Mammary epithelial cell (primary cell): ENCODE measurements at regions of chr16 and their contacts with region 1.

Region 1: GRCh38 chr16:58198022-58198683 is at the start of gene CSNK2A2:
- DNase-seq: peak; percentile 59
- H3K4me3 ChIP-seq: peak within 1 kb of the TSS; percentile 74 to 88 (median 82)
- H3K27ac ChIP-seq: no peak within 1 kb of the TSS
- H3K4me1 ChIP-seq: peaks cover 16% of the 10 kb centered on the region
- H3K27me3 ChIP-seq: no peaks in the 10 kb centered on the region
- CTCF ChIP-seq: peak; percentile 31 to 50
- total RNA-seq, gene CSNK2A2: 29.3 to 79.7 TPM

Region 2: GRCh38 chr16:58306327-58306726 is 108.2 kb after region 1 on chr16:
- CTCF ChIA-PET with region 1: no interaction called
- dilution Hi-C with region 1: no loop called
- in situ Hi-C with region 1: no loop called
- intact Hi-C with region 1: loop called (anchors 2 kb)
- DNase-seq: peak; percentile 21
- H3K4me3 ChIP-seq: no peak overlapping the region
- H3K27ac ChIP-seq: no peak overlapping the region
- H3K4me1 ChIP-seq: no peaks in the 10 kb centered on the region
- H3K27me3 ChIP-seq: no peaks in the 10 kb centered on the region
- CTCF ChIP-seq: peak; percentile 46 to 69

Region 3: GRCh38 chr16:58425756-58426494 is 227.8 kb after region 1 on chr16:
- CTCF ChIA-PET with region 1: no interaction called
- dilution Hi-C with region 1: no loop called
- in situ Hi-C with region 1: no loop called
- intact Hi-C with region 1: no loop called
- DNase-seq: no peak
- H3K4me3 ChIP-seq: no peak overlapping the region
- H3K27ac ChIP-seq: no peak overlapping the region
- H3K4me1 ChIP-seq: peaks cover 11% of the 10 kb centered on the region
- H3K27me3 ChIP-seq: peaks cover 2% of the 10 kb centered on the region
- CTCF ChIP-seq: no peak